G401 (cell line): ENCODE measurements at regions of chr17 and their contacts with region 1.

Region 1: DNA sequence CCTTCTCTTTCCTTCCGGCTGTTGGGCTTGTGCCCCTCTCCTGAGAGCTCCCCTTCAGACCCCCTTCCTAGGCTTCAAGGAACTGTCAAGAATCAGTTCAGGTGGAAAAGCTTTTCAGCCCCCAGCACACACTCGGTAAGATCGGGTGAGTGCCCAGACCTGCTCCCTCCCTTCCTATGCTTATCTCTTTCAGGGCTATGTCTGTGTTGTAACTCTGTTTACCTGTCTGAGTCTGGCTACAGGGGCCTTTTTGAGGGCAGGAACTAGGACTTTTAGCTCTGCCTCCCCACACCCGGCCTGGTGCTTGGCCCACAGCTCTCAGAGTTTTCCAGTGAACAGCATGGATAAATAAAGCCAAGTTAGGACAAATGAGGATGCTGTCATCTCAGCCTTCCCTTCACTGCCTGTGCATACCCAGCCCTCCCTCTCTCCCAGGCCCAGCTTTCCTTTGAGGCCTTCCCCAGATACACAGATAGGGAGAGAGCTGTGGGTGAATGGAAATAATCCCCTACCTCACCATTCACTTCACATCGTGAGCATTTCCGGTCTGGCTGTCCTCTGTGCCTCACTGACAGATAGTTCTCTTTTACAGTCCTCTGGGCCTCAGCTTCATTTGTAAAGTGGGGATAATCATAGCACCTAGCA is 5.7 kb upstream of the MRPS23 start:
- DNase-seq: no peak

Region 2: DNA sequence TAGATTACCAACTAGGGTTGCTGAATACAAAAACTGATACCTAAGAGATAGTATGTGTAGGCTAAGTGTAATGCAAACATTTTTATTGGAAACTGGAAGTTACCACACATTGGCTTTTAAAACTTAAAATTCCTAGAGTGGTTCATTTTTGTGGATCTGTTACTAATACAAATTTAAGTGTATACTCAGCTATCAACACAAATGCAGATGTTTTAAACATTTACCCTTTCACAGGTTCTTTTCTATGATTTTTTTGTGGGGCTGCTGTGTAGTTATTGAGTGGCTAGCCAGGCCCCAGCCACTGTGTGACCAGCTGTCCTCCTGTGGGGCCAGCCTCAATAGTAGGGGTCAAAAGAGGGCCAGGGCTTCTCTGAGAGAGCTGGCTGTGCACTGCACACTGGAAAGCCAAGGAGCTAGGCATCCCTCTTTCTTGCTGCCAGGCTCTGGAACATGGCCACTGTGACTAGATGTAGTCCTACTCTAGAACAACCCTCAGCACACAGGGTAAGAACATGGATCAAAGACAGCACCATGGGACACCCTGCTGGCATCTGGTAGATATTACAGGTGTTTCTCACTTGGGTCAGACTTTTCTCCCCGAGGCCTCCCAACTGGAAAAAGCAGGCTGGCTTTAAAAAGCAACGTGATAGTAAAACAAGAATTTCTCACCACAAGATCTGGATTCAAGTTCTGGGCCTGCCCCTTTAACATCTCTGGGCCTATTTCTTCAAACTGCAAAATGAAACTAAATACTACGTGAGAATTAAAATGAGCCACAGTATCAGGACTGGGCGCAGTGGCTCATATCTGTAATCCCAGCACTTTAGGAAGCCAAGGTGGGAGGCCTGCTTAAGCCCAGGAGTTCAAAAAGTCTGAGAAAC is 139.8 kb after region 1 on chr17:
- in situ Hi-C with region 1: loop called (anchors 5 kb)
- DNase-seq: peak; percentile 66